Heart left ventricle (tissue), 16 donors: ENCODE measurements at regions of chr2 and their contacts with region 1.

Region 1: GRCh38 chr2:62760555-62760954 is 55.0 kb downstream of the EHBP1 start:
- DNase-seq: no peak
- ATAC-seq: no peak
- H3K4me3 ChIP-seq: no peak overlapping the region
- H3K27ac ChIP-seq: no peak overlapping the region
- H3K4me1 ChIP-seq: no peaks in the 10 kb centered on the region
- H3K27me3 ChIP-seq: no peaks in the 10 kb centered on the region
- CTCF ChIP-seq: no peak
- POLR2A ChIP-seq: no peak

Region 2: DNA sequence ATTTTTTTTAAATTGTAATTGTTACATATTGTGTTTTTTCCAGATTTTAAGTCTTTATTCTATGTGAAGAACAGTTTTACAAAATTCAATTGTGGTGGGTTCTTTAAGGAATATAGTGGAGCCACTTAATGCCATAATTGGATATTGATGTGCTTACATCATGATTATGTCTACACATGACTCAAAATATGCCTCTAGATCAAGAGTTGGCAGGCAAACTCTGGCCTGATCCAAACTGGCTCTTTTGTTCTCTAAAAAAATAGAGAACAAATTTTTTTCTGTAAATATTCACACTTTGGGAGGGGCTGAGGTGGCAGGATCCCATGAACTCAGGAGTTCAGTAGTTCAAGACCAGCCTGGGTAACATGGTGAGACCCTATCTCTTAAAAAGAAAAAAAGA is 46.7 kb before region 1 on chr2:
- intact Hi-C with region 1: loop called in 1 of 10 experiments (anchors 10 kb)
- DNase-seq: no peak
- ATAC-seq: no peak
- H3K4me3 ChIP-seq: no peak overlapping the region
- H3K27ac ChIP-seq: no peak overlapping the region
- H3K4me1 ChIP-seq: peaks cover 0 to 25% (median 0%) of the 10 kb centered on the region in 12 donors
- H3K27me3 ChIP-seq: no peaks in the 10 kb centered on the region
- CTCF ChIP-seq: no peak
- POLR2A ChIP-seq: no peak

Region 3: GRCh38 chr2:62999905-63000304 is 239.3 kb after region 1 on chr2:
- intact Hi-C with region 1: no loop called
- DNase-seq: peak in 4 of 5 donors; percentile 42 to 59 (median 51)
- ATAC-seq: peak; percentile 53 to 87 (median 80)
- H3K4me3 ChIP-seq: no peak overlapping the region
- H3K27ac ChIP-seq: no peak overlapping the region
- H3K4me1 ChIP-seq: peaks cover 0 to 10% (median 0%) of the 10 kb centered on the region in 12 donors
- H3K27me3 ChIP-seq: no peaks in the 10 kb centered on the region
- CTCF ChIP-seq: no peak
- POLR2A ChIP-seq: no peak